ENCODE measurements at regions of chr2 and their contacts with region 1.

Region 1: GRCh38 chr2:143229952-143230351 is 100.7 kb downstream of the ARHGAP15 start:
- DNase-seq: no peak
- ATAC-seq: no peak
- H3K4me3 ChIP-seq: no peak overlapping the region
- H3K27ac ChIP-seq: no peak overlapping the region
- H3K4me1 ChIP-seq: no peaks in the 10 kb centered on the region
- H3K27me3 ChIP-seq: no peaks in the 10 kb centered on the region
- CTCF ChIP-seq: no peak
- POLR2A ChIP-seq: no peak

Region 2: DNA sequence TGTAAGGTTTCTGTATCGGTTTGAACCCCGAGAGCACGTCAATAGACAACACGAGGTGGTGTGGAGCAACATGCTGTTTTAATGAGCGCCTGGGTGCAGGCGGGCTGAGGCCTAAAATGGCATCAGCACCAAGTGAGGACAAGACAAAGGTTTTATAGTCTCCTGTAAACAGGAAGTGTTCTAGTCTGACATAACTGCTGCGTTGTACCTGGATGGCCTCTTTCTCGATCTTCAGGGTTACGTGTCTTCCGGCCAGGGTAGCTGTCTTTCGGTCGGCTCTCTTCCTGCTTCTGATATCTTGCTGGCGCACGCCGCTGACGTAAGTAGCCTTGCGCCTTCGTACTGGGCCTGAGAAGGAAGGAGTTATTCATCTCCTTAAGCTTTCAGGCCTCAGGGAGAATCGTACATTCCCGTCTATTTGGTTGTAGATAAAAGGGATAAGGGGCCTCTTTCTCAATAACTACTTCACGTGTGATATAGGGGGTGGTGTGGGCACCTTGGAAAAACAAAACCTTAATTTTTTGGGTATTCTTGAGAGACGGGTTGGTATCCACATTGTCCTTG is 299.0 kb before region 1 on chr2:
- in situ Hi-C with region 1: no loop called
- intact Hi-C with region 1: no loop called
- DNase-seq: no peak
- ATAC-seq: no peak
- H3K4me3 ChIP-seq: no peak overlapping the region
- H3K27ac ChIP-seq: no peak overlapping the region
- H3K4me1 ChIP-seq: no peaks in the 10 kb centered on the region
- H3K27me3 ChIP-seq: no peaks in the 10 kb centered on the region
- CTCF ChIP-seq: no peak
- POLR2A ChIP-seq: no peak

Region 3: DNA sequence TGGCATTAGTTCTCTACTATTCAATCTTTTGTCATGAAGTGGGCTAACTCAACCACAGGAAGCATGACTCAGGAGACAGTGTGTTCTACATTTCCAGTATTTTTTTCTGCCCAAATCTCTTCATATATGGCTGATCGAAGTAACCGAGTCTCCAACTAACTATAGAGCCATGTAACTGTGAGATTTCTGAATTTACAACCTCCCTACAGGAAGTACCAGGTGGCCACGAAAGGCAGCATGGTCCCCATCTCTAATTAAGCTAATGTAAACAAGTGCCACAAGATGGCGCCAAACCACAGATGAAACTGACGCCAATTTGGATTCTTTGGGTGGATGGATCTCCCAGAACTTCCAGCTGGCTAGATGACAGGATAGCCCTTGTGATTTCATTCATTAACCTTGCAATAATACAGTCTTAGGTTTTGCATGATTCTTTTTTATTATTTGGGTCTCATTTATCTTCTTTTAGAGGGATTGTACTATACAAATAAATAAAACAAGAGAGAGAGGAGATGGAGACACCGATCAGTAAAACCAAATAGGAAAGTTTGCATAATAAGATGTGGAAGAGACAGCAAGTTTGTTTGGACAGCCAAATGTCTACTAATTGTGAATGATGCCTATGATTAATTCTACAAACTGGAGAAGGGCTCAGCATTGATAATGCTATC is 119.1 kb before region 1 on chr2:
- in situ Hi-C with region 1: loop called in 1 of 4 experiments (anchors 10 kb)
- intact Hi-C with region 1: no loop called
- DNase-seq: peak in 1 of 2 donors; percentile 14
- ATAC-seq: no peak
- H3K4me3 ChIP-seq: no peak overlapping the region
- H3K27ac ChIP-seq: no peak overlapping the region
- H3K4me1 ChIP-seq: no peaks in the 10 kb centered on the region
- H3K27me3 ChIP-seq: no peaks in the 10 kb centered on the region
- CTCF ChIP-seq: peak in 2 of 5 experiments; percentile 36 to 57
- POLR2A ChIP-seq: no peak

Measured in gastrocnemius medialis (tissue), 4 donors.